ENCODE measurements at regions of chr1 and their contacts with region 1.

Region 1: GRCh38 chr1:17661546-17662157 is 93.5 kb upstream of the ACTL8 start:
- DNase-seq: peak; percentile 44
- ATAC-seq: peak; percentile 95
- H3K4me3 ChIP-seq: no peak overlapping the region
- H3K27ac ChIP-seq: no peak overlapping the region
- H3K4me1 ChIP-seq: no peaks in the 10 kb centered on the region
- H3K27me3 ChIP-seq: no peaks in the 10 kb centered on the region
- CTCF ChIP-seq: peak; percentile 86
- POLR2A ChIP-seq: no peak
- RAD21 ChIP-seq: peak; percentile 90

Region 2: DNA sequence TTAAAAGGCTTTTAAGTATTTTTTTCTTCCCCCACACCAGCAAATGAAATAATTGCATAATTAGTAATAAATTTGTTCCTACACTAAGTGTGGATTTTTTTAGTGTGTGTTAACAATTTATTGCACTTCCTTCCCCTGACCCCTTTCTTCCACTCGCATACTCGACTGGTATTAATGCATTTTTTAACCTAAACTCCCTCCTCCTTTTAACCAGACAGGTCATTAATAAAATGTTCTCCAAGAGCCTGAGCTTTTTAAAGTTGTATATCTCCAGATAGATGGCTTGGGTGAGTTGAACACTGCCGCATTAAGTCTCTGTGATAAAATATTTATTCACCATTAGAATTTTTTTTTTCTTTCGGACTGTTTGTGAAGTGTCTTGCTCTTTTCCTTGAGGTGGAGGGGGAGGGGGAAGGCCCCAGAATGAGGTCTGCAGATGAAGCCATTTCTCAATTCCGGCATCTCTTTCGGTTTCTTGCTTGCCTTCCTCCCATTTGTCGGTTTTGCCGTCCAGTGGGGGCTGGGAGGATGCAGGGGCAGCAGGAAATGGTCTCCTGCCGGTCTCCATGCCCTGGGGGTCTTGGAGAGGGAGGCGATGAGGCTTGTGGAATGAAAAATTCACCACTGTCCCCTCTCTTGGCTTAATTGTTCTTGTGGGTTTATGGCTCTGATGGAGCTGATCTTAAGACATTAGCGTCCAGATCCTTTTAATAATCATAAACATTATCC is 29.4 kb after region 1 on chr1:
- CTCF ChIA-PET with region 1: interaction called, 10 read pairs
- POLR2A ChIA-PET with region 1: no interaction called
- dilution Hi-C with region 1: no loop called
- in situ Hi-C with region 1: no loop called
- intact Hi-C with region 1: no loop called
- DNase-seq: no peak
- ATAC-seq: no peak
- H3K4me3 ChIP-seq: no peak overlapping the region
- H3K27ac ChIP-seq: no peak overlapping the region
- H3K4me1 ChIP-seq: no peaks in the 10 kb centered on the region
- H3K27me3 ChIP-seq: no peaks in the 10 kb centered on the region
- CTCF ChIP-seq: no peak
- POLR2A ChIP-seq: no peak
- RAD21 ChIP-seq: no peak

Region 3: DNA sequence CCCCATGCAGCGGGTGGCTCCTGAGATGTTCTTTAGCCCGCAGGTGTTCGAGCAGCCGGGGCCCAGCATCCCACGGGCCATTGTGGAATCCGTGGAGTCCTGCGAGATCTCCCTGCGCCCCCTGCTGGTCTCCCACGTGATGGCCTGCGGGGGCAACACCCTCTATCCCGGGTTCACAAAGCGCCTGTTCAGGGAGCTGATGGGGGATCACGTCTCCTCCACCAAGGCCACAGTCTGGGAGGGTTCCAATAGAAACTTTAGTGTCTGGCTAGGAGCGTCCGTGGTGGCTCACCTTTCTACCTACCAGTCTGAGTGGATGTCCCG is 164.5 kb after region 1 on chr1:
- CTCF ChIA-PET with region 1: interaction called, 9 read pairs
- POLR2A ChIA-PET with region 1: no interaction called
- dilution Hi-C with region 1: no loop called
- in situ Hi-C with region 1: loop called (anchors 5 kb)
- intact Hi-C with region 1: loop called (anchors 1 kb)
- DNase-seq: peak; percentile 17
- ATAC-seq: peak; percentile 88
- H3K4me3 ChIP-seq: no peak overlapping the region
- H3K27ac ChIP-seq: no peak overlapping the region
- H3K4me1 ChIP-seq: no peaks in the 10 kb centered on the region
- H3K27me3 ChIP-seq: peaks cover 5% of the 10 kb centered on the region
- CTCF ChIP-seq: peak; percentile 60
- POLR2A ChIP-seq: no peak
- RAD21 ChIP-seq: peak; percentile 66

Region 4: DNA sequence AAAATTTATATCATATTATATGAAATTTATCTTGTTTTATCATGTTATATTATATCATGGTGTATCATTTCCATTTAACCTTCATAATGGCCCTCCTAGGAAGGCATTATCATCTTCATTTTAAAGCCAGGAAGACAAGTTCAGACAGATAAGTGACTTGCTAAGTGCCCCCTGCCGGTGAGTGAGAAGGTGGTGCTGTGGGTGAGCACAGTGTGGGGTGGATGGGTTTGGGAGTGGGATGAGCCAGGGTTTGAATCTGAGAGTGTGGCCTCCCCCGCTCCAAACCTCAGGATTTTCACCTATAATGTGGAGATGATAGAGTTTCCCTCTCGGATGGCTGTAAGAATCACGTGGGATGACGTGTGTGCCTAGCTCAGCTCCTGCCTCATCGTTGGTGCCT is 337.2 kb after region 1 on chr1:
- CTCF ChIA-PET with region 1: no interaction called
- POLR2A ChIA-PET with region 1: interaction called, 15 read pairs
- dilution Hi-C with region 1: no loop called
- in situ Hi-C with region 1: no loop called
- intact Hi-C with region 1: no loop called
- DNase-seq: peak; percentile 4
- ATAC-seq: no peak
- H3K4me3 ChIP-seq: no peak overlapping the region
- H3K27ac ChIP-seq: no peak overlapping the region
- H3K4me1 ChIP-seq: no peaks in the 10 kb centered on the region
- H3K27me3 ChIP-seq: no peaks in the 10 kb centered on the region
- CTCF ChIP-seq: peak; percentile 30
- POLR2A ChIP-seq: no peak
- RAD21 ChIP-seq: peak; percentile 12; the same call in 1 of the 2 replicates

Region 5: DNA sequence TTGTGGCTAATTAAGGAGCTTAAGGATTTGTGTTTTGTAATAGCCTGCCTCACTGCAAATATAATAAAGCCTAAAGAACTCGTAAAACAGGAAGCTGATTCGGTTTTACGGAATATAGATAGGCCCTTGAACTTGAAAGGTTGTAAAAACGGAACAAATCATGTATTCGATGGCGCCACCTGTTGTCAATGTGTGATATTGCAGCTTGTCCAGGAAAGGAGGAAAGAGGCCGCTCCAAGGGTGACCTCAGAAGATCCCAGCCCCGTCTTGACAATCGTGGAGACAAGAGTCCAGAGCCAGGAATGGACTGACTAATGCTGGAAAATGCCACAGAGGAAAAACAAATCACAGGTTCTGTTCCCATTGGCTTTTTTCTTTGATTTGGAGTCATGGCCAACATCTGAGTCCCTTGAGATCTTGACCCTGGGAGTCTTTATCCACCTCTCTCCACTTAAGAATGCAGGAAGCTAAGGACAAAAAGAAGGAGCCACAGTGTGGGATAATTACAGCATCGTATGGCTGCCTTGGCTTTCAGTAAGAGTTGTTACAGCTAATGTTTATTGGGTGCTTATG is 438.9 kb after region 1 on chr1:
- CTCF ChIA-PET with region 1: interaction called, 3 read pairs
- POLR2A ChIA-PET with region 1: no interaction called
- dilution Hi-C with region 1: no loop called
- in situ Hi-C with region 1: loop called (anchors 5 kb)
- intact Hi-C with region 1: loop called (anchors 1 kb)
- DNase-seq: peak; percentile 49
- ATAC-seq: peak; percentile 82
- H3K4me3 ChIP-seq: no peak overlapping the region
- H3K27ac ChIP-seq: no peak overlapping the region
- H3K4me1 ChIP-seq: no peaks in the 10 kb centered on the region
- H3K27me3 ChIP-seq: peaks cover 3% of the 10 kb centered on the region; the same call in 1 of the 2 replicates
- CTCF ChIP-seq: peak; percentile 73
- POLR2A ChIP-seq: no peak
- RAD21 ChIP-seq: peak; percentile 63

Measured in IMR-90 (cell line).